H1 (cell line): ENCODE measurements at regions of chr4 and their contacts with region 1.

Region 1: DNA sequence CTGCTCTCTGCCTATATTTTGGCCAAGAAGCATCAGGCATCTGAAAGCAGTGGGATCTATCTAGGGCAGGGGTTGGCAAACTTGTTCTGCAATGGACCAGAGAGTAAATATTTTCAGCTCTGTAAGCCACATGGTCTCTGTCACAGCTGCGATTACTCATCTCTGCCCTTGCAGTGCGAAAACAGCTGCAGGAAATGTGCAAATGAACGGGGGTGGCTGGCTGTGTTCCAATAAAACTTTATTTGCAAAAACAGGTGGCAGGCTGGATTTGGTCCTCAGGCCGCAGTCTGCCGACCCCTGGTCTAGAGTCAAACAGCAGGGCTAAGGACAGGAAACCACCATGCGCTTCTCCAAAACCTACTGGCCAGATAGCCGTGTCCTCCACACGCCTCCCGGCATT is 48.6 kb downstream of the ACOX3 start:
- DNase-seq: no peak
- H3K4me3 ChIP-seq: no peak overlapping the region
- H3K27ac ChIP-seq: no peak overlapping the region
- H3K4me1 ChIP-seq: peaks cover 0 to 2% (median 1%) of the 10 kb centered on the region in 4 experiments; a peak in 6 of 7 replicates
- H3K27me3 ChIP-seq: no peaks in the 10 kb centered on the region
- CTCF ChIP-seq: no peak
- EP300 ChIP-seq: no peak
- POLR2A ChIP-seq: no peak
- RAD21 ChIP-seq: no peak

Region 2: GRCh38 chr4:8376361-8376760 is 15.6 kb before region 1 on chr4:
- CTCF ChIA-PET with region 1: interaction called, 30 read pairs
- POLR2A ChIA-PET with region 1: interaction called, 3 read pairs
- DNase-seq: no peak
- H3K4me3 ChIP-seq: no peak overlapping the region
- H3K27ac ChIP-seq: no peak overlapping the region
- H3K4me1 ChIP-seq: peaks cover 0 to 5% (median 2%) of the 10 kb centered on the region in 4 experiments; a peak in 3 of 7 replicates
- H3K27me3 ChIP-seq: no peaks in the 10 kb centered on the region
- CTCF ChIP-seq: no peak
- EP300 ChIP-seq: no peak
- POLR2A ChIP-seq: no peak
- RAD21 ChIP-seq: no peak